ENCODE measurements at regions of chr3 and their contacts with region 1.

Region 1: DNA sequence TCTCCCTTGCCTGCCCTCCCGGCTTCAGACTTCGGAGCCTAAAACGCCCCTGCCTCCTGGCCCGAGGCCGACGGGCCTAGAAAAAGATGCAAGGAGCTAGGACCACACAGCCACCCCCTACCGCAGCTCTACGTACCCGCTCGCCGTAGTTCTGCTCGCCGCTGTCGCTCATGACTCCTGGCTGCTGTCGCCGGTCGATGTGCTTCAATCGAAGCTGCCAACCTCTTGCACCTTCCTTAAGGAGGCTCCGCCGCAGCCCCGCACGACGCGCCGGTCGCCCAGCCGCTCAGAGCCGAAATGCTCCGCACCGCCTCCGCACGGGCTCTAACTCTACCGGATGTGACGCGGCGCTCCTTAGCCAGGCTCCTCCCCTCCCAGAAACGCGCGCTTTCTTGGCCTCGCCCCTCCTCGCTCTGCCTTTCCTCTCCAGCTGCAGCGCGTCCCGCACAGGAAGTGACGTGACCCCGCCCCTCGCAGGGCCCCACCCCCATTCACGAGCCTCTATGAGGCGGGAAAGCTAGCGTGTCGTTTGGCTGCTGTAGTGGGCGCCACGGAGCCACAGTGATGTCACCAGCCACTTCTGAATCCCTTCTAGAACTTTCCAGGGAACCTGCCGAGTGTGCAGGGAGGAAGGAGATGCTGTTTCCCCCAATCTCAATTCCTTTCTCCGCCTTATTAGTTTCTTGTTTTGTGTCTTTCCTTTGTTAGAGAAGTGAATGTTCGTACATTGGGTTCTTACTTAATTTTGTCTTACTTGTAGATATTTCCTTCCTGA is at the start of gene TRA2B:
- DNase-seq: peak; percentile 100
- ATAC-seq: peak; percentile 90
- H3K4me3 Mint-ChIP-seq: peak within 1 kb of the TSS; percentile 97
- H3K27ac Mint-ChIP-seq: peak within 1 kb of the TSS; percentile 100
- H3K4me1 Mint-ChIP-seq: peaks cover 23% of the 10 kb centered on the region
- H3K27me3 Mint-ChIP-seq: no peaks in the 10 kb centered on the region
- total RNA-seq, gene TRA2B: 228 to 344 TPM

Region 2: DNA sequence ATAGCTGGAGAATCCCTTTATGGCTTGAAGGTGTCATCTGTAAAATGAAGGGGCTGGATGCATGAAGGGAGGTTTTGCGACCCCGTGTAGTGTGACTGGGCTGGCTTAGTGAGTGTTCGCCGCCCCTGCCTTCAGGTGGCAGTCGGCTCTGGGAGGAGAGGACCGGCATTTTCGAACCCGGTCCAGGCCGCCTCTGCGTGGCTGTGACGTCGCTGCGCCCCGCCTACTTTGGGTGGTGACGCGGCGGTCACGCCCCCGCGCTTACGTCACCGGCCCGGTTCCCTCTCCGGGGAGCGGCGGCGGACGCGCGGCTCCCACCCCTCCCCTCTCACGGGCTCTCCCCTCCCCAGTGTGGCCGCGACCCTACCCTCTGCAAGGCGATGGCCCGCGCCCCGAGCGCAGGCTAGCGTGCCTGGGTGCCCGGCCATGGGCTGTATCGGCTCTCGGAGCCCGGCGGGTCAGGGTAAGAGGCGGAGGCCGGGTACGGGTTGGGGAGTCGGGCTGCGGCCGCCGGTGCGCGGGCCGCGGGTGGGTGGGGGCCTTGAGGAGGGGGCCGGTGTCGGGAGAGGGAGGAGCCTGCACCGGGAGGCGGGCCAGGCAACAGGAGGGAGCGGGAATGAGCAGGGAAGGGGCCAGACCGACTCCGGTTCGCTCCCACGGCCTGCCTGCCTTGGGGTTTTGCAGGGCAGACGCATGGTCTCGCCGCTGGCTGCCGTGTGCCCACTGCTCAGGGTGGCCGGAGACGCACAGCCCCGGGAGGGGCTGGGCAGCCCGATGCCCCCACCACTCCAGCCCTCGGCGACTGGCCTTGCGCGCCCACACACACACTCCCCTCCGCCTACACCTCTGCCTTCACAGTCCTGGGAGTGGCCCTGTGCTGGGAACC is 1602.0 kb before region 1 on chr3:
- CTCF ChIA-PET with region 1: no interaction called
- POLR2A ChIA-PET with region 1: no interaction called
- intact Hi-C with region 1: loop called in 1 of 2 experiments (anchors 10 kb)
- DNase-seq: peak; percentile 92
- ATAC-seq: peak; percentile 50
- H3K4me3 Mint-ChIP-seq: peak overlapping the region; percentile 75
- H3K27ac Mint-ChIP-seq: peak overlapping the region; percentile 85
- H3K4me1 Mint-ChIP-seq: peaks cover 62% of the 10 kb centered on the region
- H3K27me3 Mint-ChIP-seq: no peaks in the 10 kb centered on the region

Region 3: DNA sequence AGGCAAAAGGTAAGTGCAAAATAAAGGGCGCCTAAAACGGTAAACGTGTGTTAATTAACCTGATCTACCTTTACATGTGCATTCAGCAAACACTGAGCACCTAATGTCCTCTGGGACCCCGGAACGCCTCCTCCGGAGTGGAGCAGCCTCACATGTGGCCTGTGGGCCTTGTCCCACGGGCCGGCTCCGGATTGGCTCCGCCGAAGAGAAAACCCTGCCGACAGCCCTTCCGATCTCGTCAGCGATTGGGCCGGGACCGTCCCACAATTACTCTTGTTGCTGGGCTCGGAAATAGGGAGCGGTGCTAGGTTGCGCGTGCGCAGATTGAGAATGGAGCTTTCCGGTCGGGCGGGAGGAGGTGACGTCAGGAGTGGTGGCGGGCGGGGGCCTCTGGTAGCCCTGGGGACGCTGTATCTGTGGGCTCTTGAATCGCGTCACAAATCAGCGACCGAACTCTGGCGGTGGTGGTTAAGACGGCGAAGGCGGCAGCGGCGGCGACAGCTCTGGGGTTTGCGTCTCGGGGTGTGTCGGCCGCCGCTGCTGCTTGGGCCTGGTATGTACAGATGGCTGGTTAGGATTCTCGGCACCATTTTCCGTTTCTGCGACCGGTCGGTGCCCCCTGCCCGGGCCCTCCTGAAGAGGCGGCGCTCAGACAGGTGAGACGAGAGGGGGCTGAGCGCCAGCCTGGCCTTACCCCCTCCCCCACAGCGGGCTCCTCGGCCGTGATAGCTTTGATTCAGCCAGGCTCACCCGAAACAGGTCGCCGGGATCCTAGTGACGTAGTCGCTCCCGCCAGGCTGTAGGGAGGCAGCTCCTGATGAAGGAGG is 351.8 kb before region 1 on chr3 and contains the start of gene SENP2:
- CTCF ChIA-PET with region 1: no interaction called
- POLR2A ChIA-PET with region 1: no interaction called
- intact Hi-C with region 1: loop called in 1 of 2 experiments (anchors 1 kb)
- DNase-seq: peak; percentile 100
- ATAC-seq: peak; percentile 98
- H3K4me3 Mint-ChIP-seq: peak within 1 kb of the TSS; percentile 87
- H3K27ac Mint-ChIP-seq: peak within 1 kb of the TSS; percentile 93
- H3K4me1 Mint-ChIP-seq: peaks cover 26% of the 10 kb centered on the region
- H3K27me3 Mint-ChIP-seq: no peaks in the 10 kb centered on the region
- total RNA-seq, gene SENP2: 23.2 to 24.6 TPM

Region 4: DNA sequence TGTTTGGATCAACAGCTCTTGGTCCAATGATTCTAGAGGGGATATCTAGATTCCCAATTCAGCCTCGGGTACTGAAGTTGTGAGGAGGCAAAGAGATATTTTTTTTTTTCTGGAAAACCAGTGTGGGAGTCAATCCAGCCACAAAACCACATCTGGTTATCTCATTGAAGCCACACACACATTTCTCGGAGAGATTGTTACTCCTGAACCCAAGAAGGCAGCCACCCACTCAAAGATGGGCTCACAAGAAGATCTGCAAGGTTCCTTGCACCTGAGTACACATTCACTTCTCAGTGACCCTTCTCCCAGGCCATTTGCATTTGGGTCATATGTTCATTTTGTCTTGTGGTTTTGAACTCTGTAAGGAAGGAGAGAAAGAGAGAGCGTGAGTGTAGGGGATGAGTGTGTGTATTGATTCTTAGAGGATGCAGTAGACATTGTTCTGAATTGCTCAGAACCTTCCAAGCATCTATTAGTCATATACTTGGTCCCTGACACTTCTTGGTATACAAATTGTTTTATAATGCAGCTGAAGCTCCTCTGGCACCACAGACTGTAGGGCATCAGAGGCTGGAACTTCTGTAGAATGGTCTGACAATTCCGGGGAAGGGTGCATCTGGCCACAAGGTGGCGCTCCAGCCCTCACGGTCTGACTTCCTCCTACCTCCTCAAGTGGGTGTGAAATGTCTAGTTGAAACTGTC is 39.3 kb after region 1 on chr3:
- CTCF ChIA-PET with region 1: interaction called, 40 read pairs
- POLR2A ChIA-PET with region 1: interaction called, 6 read pairs
- intact Hi-C with region 1: loop called (anchors 1 to 2 kb)
- DNase-seq: peak; percentile 93
- ATAC-seq: peak; percentile 91
- H3K4me3 Mint-ChIP-seq: no peak overlapping the region
- H3K27ac Mint-ChIP-seq: peak overlapping the region; percentile 11
- H3K4me1 Mint-ChIP-seq: peaks cover 18% of the 10 kb centered on the region
- H3K27me3 Mint-ChIP-seq: no peaks in the 10 kb centered on the region

Region 5: DNA sequence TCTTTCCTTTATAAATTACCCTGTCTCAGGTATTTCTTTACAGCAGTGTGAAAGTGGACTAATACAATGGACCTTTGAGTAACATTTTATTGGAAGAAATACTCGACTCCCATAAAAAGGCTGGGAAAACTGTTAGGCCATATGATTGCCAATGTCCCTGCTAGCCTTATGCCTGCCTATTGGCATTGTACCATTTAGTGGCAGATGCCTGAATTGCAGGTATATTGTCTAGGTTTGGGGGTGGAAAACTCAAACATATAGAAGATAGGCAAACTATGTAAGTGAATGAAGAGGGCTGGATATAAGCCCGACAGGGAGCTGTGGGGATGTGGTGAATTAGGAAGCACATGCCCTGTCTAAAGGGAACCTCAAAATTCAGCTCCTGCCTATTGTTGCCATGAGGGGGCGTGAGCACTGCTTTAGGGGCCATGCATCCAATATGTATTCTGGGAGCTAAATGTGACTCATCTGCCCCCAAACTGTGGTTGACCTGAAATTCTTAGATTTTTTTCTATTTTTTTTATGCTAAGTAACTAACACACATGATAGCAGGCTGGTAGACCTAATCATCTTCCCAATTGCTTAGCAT is 65.1 kb after region 1 on chr3:
- CTCF ChIA-PET with region 1: no interaction called
- POLR2A ChIA-PET with region 1: no interaction called
- intact Hi-C with region 1: no loop called
- DNase-seq: peak; percentile 24
- ATAC-seq: peak; percentile 39
- H3K4me3 Mint-ChIP-seq: no peak overlapping the region
- H3K27ac Mint-ChIP-seq: no peak overlapping the region
- H3K4me1 Mint-ChIP-seq: peaks cover 12% of the 10 kb centered on the region
- H3K27me3 Mint-ChIP-seq: peaks cover 11% of the 10 kb centered on the region

Region 6: DNA sequence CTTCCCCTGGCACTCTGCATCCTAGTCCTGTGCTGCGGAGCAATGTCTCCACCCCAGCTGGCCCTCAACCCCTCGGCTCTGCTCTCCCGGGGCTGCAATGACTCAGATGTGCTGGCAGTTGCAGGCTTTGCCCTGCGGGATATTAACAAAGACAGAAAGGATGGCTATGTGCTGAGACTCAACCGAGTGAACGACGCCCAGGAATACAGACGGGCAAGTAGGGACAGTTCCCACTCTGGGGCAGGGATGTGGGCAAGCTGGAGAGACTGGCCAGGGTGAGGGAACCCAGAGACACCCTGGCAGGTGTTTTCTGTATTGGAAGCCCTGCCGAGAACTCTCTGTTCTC is 702.6 kb after region 1 on chr3:
- CTCF ChIA-PET with region 1: no interaction called
- POLR2A ChIA-PET with region 1: no interaction called
- intact Hi-C with region 1: no loop called
- DNase-seq: no peak
- ATAC-seq: no peak
- H3K4me3 Mint-ChIP-seq: no peak overlapping the region
- H3K27ac Mint-ChIP-seq: no peak overlapping the region
- H3K4me1 Mint-ChIP-seq: peaks cover 3% of the 10 kb centered on the region
- H3K27me3 Mint-ChIP-seq: peaks cover 17% of the 10 kb centered on the region

Region 7: DNA sequence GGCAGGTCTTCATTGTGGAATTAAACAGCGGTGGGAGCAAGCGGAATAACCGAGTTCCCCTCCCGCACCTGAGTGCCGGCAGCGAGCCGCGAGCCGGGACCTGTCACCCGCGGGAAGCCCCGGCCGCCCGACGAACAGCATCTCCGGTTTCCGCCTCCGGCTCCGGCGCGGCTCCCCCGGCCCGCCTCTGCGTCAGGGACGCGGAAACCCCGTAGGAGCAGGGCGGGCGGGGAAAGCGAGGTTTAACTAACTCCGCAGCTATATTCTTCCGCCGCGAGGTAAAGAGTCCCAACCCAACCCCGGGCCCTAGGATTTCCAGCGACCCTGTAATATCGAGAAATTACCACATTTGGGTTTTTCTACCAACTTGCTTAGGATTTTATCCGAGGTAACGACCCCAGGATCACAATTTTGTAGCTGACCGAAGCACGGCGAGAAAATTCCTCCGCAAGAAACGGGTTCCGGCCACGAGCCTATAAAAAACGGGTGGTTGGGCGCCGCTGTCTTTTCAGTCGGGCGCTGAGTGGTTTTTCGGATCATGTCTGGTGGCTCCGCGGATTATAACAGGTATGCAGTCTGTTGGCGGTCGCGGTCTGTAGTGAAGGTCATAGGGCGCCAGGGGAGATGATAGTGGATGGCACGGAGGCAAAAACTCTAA is 845.3 kb after region 1 on chr3 and contains the start of gene EIF4A2:
- CTCF ChIA-PET with region 1: no interaction called
- POLR2A ChIA-PET with region 1: no interaction called
- intact Hi-C with region 1: loop called (anchors 1 to 2 kb)
- DNase-seq: peak; percentile 95
- ATAC-seq: peak; percentile 69
- H3K4me3 Mint-ChIP-seq: peak within 1 kb of the TSS; percentile 100
- H3K27ac Mint-ChIP-seq: peak within 1 kb of the TSS; percentile 100
- H3K4me1 Mint-ChIP-seq: peaks cover 32% of the 10 kb centered on the region
- H3K27me3 Mint-ChIP-seq: no peaks in the 10 kb centered on the region
- total RNA-seq, gene EIF4A2: 291 to 390 TPM

Region 8: GRCh38 chr3:187041362-187042307 is 1103.8 kb after region 1 on chr3:
- CTCF ChIA-PET with region 1: no interaction called
- POLR2A ChIA-PET with region 1: no interaction called
- intact Hi-C with region 1: loop called in 1 of 2 experiments (anchors 5 kb)
- DNase-seq: peak; percentile 61
- ATAC-seq: peak; percentile 92
- H3K4me3 Mint-ChIP-seq: peak overlapping the region; percentile 40
- H3K27ac Mint-ChIP-seq: peak overlapping the region; percentile 95
- H3K4me1 Mint-ChIP-seq: peaks cover 81% of the 10 kb centered on the region
- H3K27me3 Mint-ChIP-seq: no peaks in the 10 kb centered on the region

Measured in activated CD4-positive, alpha-beta T cell treated with anti-CD3 and anti-CD28 coated beads for 36 hours (primary cell).